Colonic mucosa (tissue), 4 donors: ENCODE measurements at regions of chr12 and their contacts with region 1.

Region 1: GRCh38 chr12:98516184-98516873 is 939 bp downstream of the TMPO start:
- DNase-seq: peak; percentile 86
- H3K4me3 ChIP-seq: peak overlapping the region; percentile 93
- H3K27ac ChIP-seq: peak overlapping the region; percentile 89
- H3K4me1 ChIP-seq: peaks cover 4% of the 10 kb centered on the region
- H3K27me3 ChIP-seq: no peaks in the 10 kb centered on the region
- CTCF ChIP-seq: peak; percentile 75

Region 2: GRCh38 chr12:98424726-98425401 is 91.5 kb before region 1 on chr12:
- intact Hi-C with region 1: loop called (anchors 5 kb)
- DNase-seq: peak; percentile 77
- H3K4me3 ChIP-seq: no peak overlapping the region
- H3K27ac ChIP-seq: no peak overlapping the region
- H3K4me1 ChIP-seq: no peaks in the 10 kb centered on the region
- H3K27me3 ChIP-seq: no peaks in the 10 kb centered on the region
- CTCF ChIP-seq: peak; percentile 60